ENCODE measurements at regions of chr9 and their contacts with region 1.

Region 1: DNA sequence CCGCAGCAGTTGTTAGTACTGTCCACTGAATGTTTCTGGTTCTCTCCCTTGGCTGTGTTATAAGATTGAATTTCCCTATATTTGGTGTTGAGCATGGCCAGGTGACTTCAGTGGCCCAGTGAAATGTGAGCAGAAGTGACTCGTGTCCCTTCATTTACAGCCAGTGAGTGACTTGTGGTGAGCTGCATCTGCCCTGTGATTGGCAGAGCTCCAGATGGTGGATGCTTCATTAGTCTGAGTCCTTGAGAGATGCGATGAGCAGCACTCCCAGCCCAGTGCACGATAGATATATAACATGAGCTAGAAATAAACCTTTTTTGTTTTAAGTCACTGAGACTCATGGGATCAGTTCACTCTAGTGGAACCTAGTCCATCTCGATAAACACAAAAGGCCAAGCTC is 19.3 kb downstream of the PCSK5 start:
- DNase-seq: peak; percentile 14
- ATAC-seq: no peak
- H3K4me3 Mint-ChIP-seq: no peak overlapping the region
- H3K27ac Mint-ChIP-seq: no peak overlapping the region
- H3K4me1 Mint-ChIP-seq: peaks cover 48% of the 10 kb centered on the region
- H3K27me3 Mint-ChIP-seq: no peaks in the 10 kb centered on the region

Region 2: GRCh38 chr9:75451505-75451904 is 458.3 kb before region 1 on chr9:
- CTCF ChIA-PET with region 1: no interaction called
- POLR2A ChIA-PET with region 1: no interaction called
- intact Hi-C with region 1: no loop called
- DNase-seq: no peak
- ATAC-seq: no peak
- H3K4me3 Mint-ChIP-seq: no peak overlapping the region
- H3K27ac Mint-ChIP-seq: no peak overlapping the region
- H3K4me1 Mint-ChIP-seq: no peaks in the 10 kb centered on the region
- H3K27me3 Mint-ChIP-seq: peaks cover 8% of the 10 kb centered on the region

Region 3: DNA sequence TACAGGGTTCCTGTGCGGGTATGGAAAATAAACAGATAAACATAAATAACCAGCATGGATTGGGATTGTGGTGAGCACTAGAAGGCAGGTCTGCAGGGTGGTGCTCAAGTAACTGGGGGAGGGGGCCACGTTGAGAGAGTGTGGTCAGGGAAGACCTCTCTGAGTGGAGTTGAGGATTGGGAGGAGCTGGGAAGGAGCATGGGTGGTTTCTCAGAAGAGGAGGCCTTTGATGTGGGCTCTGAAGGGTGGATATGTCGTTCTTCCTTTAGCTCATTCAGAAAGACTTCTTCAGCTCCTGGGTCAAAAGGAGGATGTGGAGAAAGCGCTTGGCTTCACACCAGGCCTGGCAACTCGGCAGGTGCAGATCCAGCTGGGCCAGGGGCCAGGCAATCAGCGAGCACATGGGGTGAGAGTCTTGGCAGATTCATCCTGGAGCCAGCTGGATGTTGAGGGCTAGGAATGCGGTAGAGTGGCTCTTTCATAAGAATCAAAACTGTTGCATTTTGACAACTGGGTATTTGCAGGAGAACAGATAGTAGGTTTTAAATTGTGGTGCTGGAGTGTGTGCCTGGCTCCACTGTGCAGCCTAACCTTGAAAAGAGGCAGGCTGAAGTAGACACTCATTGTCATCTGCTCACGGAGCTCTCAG is 52.4 kb after region 1 on chr9:
- CTCF ChIA-PET with region 1: no interaction called
- POLR2A ChIA-PET with region 1: no interaction called
- intact Hi-C with region 1: loop called in 1 of 2 experiments (anchors 5 kb)
- DNase-seq: no peak
- ATAC-seq: peak; percentile 16
- H3K4me3 Mint-ChIP-seq: no peak overlapping the region
- H3K27ac Mint-ChIP-seq: peak overlapping the region; percentile 28
- H3K4me1 Mint-ChIP-seq: peaks cover 20% of the 10 kb centered on the region
- H3K27me3 Mint-ChIP-seq: no peaks in the 10 kb centered on the region

Region 4: GRCh38 chr9:75993434-75993833 is 83.7 kb after region 1 on chr9:
- CTCF ChIA-PET with region 1: no interaction called
- POLR2A ChIA-PET with region 1: no interaction called
- intact Hi-C with region 1: loop called in 1 of 2 experiments (anchors 1 kb)
- DNase-seq: no peak
- ATAC-seq: peak; percentile 24
- H3K4me3 Mint-ChIP-seq: no peak overlapping the region
- H3K27ac Mint-ChIP-seq: no peak overlapping the region
- H3K4me1 Mint-ChIP-seq: peaks cover 53% of the 10 kb centered on the region
- H3K27me3 Mint-ChIP-seq: no peaks in the 10 kb centered on the region

Region 5: GRCh38 chr9:76004526-76004925 is 94.8 kb after region 1 on chr9:
- CTCF ChIA-PET with region 1: no interaction called
- POLR2A ChIA-PET with region 1: no interaction called
- intact Hi-C with region 1: loop called in 1 of 2 experiments (anchors 5 kb)
- DNase-seq: no peak
- ATAC-seq: peak; percentile 73
- H3K4me3 Mint-ChIP-seq: no peak overlapping the region
- H3K27ac Mint-ChIP-seq: peak overlapping the region; percentile 32
- H3K4me1 Mint-ChIP-seq: peaks cover 50% of the 10 kb centered on the region
- H3K27me3 Mint-ChIP-seq: no peaks in the 10 kb centered on the region